PC-9 (cell line): ENCODE measurements at regions of chr5 and their contacts with region 1.

Region 1: DNA sequence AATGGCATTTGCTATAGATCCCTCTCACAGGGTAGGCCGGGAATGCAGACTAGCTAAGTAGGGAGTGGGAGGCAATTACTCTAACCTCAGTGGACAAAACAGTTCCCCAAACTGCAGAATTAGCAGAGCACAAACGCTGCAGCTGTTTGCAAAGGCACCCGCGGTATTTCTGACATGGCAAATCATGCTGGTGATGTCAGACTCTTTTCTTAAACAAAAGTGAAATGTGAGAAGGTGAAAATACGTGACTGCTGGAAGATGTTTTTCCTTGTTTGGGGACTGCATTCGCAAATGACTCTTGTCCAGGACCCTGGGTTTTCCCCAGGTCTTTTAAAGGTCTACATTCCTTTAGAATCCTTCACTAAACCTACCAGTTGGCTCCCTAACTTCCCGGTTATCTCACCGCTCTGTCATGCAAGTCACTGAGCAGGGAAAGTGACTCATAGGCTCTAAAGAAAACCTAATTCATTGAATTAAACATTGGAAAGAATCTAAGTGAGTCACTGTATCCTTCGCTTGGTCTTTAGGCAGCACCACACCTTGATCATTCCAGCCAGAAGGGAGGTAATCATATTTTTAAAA is 91.5 kb upstream of the DNAH5 start:
- DNase-seq: peak; percentile 94 to 100
- H3K4me3 ChIP-seq: peak overlapping the region; percentile 18; the same call in 1 of the 2 replicates
- H3K27ac ChIP-seq: peak overlapping the region; percentile 98
- H3K4me1 ChIP-seq: peaks cover 83% of the 10 kb centered on the region
- H3K27me3 ChIP-seq: no peaks in the 10 kb centered on the region
- CTCF ChIP-seq: no peak

Region 2: GRCh38 chr5:14011089-14012004 is 24.6 kb before region 1 on chr5:
- CTCF ChIA-PET with region 1: interaction called, 7 read pairs
- POLR2A ChIA-PET with region 1: interaction called, 37 read pairs
- intact Hi-C with region 1: loop called (anchors 1 kb)
- DNase-seq: peak; percentile 87 to 100
- H3K4me3 ChIP-seq: peak overlapping the region; percentile 63
- H3K27ac ChIP-seq: peak overlapping the region; percentile 75
- H3K4me1 ChIP-seq: peaks cover 40% of the 10 kb centered on the region
- H3K27me3 ChIP-seq: no peaks in the 10 kb centered on the region
- CTCF ChIP-seq: no peak

Region 3: GRCh38 chr5:14108170-14108996 is 72.4 kb after region 1 on chr5:
- CTCF ChIA-PET with region 1: interaction called, 3 read pairs
- POLR2A ChIA-PET with region 1: interaction called, 13 read pairs
- intact Hi-C with region 1: loop called (anchors 1 kb)
- DNase-seq: peak in 1 of 2 experiments; percentile 81
- H3K4me3 ChIP-seq: no peak overlapping the region
- H3K27ac ChIP-seq: peak overlapping the region; percentile 22; the same call in 1 of the 2 replicates
- H3K4me1 ChIP-seq: peaks cover 10% of the 10 kb centered on the region
- H3K27me3 ChIP-seq: no peaks in the 10 kb centered on the region
- CTCF ChIP-seq: peak; percentile 59

Region 4: DNA sequence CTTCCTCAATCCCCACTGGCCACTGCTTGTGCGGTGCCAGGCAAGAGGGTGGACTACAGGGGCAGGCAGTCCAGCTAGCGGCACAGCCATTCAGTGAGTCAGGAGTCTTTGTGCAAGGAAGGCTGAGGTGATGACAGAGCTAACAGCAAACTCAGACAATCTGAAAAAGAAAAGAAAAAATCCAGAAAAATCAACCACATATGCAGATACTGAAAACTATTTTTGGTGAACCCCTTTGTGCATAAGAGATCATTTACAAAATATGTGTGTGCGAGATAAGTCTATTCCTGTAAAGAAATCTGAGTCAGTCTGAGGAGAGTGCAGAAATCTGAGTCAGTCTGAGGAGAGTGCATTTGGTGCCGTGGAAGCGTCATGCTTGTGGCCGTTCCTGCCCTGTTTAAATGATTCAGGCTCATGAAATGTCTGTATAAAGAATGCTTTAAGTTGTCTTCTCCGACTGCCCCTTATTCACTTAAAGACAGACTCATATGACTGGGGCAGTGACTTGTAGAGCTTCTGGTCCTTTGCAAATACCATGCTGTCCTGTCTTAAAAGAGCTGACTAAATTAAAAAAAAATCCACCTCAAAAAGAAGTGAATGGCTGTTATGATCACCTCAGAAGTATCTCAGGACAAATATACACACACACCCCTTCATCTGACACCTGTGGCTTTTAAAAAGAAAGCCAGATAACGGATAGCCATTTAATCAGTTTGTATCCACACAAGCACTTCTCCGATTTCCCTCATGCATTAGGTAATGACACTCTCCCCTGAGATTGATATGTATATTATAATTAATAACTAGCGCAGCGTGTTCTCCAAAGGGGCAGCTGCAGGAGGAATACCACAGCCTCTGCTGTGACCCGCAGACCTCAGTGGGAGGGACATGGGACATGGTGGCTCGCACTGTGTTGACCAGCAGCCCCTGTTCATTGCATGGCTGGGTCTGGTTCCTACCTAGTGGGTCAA is 154.5 kb after region 1 on chr5:
- CTCF ChIA-PET with region 1: no interaction called
- POLR2A ChIA-PET with region 1: interaction called, 11 read pairs
- intact Hi-C with region 1: loop called (anchors 1 kb)
- DNase-seq: peak; percentile 87 to 98
- H3K4me3 ChIP-seq: peak overlapping the region; percentile 30; the same call in 1 of the 2 replicates
- H3K27ac ChIP-seq: peak overlapping the region; percentile 92
- H3K4me1 ChIP-seq: peaks cover 79% of the 10 kb centered on the region
- H3K27me3 ChIP-seq: no peaks in the 10 kb centered on the region
- CTCF ChIP-seq: no peak

Region 5: GRCh38 chr5:14234219-14234618 is 198.3 kb after region 1 on chr5:
- CTCF ChIA-PET with region 1: interaction called, 3 read pairs
- POLR2A ChIA-PET with region 1: interaction called, 14 read pairs
- intact Hi-C with region 1: loop called (anchors 1 kb)
- DNase-seq: peak; percentile 93
- H3K4me3 ChIP-seq: no peak overlapping the region
- H3K27ac ChIP-seq: peak overlapping the region; percentile 73
- H3K4me1 ChIP-seq: peaks cover 40% of the 10 kb centered on the region
- H3K27me3 ChIP-seq: no peaks in the 10 kb centered on the region
- CTCF ChIP-seq: no peak

Region 6: GRCh38 chr5:14270209-14270702 is 234.3 kb after region 1 on chr5:
- CTCF ChIA-PET with region 1: interaction called, 13 read pairs
- POLR2A ChIA-PET with region 1: interaction called, 17 read pairs
- intact Hi-C with region 1: loop called (anchors 1 kb)
- DNase-seq: peak; percentile 81 to 86
- H3K4me3 ChIP-seq: 0 out of 2 replicates have a peak overlapping the region, but pooled peaks have one; percentile 8
- H3K27ac ChIP-seq: peak overlapping the region; percentile 88
- H3K4me1 ChIP-seq: peaks cover 57% of the 10 kb centered on the region
- H3K27me3 ChIP-seq: no peaks in the 10 kb centered on the region
- CTCF ChIP-seq: peak; percentile 90

Region 7: DNA sequence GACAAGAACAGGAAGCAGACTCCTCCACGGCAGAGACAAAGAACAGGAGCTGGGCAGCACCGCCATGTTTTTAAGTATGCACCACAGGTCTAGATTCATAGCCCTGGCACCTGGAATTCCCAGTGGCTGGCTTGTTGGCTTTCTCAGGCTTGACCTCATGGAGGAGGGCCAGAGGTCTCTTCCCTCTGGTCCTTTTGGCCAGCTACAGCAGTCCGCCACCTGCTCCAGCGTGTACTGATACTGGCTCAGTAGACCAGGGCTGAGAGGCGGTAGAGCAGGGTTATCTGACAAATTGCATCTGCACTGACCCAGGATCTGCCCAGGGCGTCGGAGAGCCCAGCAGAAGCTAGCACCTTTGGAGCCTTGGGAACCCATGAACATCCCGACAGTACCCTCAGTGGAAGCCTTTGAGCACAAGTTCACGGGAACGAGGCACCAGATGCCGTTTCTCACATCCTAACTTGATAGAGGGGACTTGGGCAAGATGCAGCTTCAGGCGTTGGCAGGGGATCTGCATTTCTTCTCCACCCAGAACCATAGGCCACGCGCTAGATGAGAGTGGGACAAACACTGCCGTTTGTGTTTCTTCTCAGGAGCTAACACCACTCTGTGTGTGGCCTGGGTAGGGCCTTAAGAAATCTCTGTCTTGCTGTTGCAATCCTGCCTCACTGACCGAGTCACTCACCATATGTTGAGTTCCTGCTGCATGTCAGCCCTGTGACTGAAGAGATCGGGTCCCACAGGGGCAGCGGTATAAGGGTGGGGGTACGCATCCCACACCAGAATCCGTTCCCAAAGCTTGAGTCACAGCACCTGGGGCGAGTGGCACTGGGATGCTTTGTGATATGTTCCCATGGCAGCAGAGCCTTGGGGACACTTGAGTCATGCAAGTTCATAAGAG is 455.3 kb after region 1 on chr5:
- CTCF ChIA-PET with region 1: no interaction called
- POLR2A ChIA-PET with region 1: interaction called, 7 read pairs
- intact Hi-C with region 1: loop called (anchors 5 kb)
- DNase-seq: peak; percentile 60 to 92
- H3K4me3 ChIP-seq: no peak overlapping the region
- H3K27ac ChIP-seq: no peak overlapping the region
- H3K4me1 ChIP-seq: no peaks in the 10 kb centered on the region
- H3K27me3 ChIP-seq: no peaks in the 10 kb centered on the region
- CTCF ChIP-seq: no peak

Region 8: GRCh38 chr5:14977058-14977685 is 941.2 kb after region 1 on chr5:
- CTCF ChIA-PET with region 1: no interaction called
- POLR2A ChIA-PET with region 1: no interaction called
- intact Hi-C with region 1: no loop called
- DNase-seq: no peak
- H3K4me3 ChIP-seq: no peak overlapping the region
- H3K27ac ChIP-seq: no peak overlapping the region
- H3K4me1 ChIP-seq: no peaks in the 10 kb centered on the region
- H3K27me3 ChIP-seq: no peaks in the 10 kb centered on the region
- CTCF ChIP-seq: no peak